ENCODE measurements at regions of chr13 and their contacts with region 1.

Region 1: DNA sequence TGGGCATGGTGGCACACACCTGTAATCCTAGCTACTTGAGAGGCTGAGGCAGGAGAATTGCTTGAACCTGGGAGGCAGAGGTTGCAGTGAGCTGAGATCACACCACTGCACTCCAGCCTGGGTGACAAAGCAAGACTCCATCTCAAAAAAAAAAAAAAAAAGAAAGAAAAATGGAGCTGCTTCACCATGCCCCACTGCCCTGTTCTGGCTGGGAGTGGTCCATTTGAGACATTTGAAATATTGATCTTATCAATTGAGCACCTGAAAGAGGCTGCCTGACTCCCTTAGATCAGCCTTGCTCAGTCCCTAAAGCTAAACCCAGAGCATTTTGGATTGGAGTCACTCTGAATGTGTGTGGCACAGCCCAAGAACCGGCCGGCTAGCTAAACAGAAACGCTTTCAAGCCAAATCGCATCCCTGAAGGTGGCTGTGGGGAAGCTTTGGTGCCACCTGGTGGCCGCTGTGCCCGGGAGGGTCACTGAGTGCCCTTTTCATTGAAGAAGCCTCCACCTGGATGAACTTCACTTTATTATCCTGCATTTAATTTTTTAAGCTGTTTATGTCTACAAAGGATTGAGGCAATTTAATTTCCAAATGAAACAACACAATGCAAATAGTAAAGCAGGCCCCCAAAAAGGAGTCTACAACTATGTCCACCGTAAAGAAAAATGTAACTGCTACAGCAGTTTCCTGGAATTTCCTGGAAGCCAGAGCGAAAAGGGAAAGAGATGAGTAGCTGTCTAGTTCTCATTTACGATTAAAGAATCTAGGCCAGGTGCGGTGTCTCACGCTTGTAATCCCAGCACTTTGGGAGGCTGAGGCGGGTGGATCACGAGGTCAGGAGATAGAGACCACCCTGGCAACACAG is 53.1 kb upstream of the SERPINE3 start:
- DNase-seq: no peak
- H3K4me3 ChIP-seq: no peak overlapping the region
- H3K27ac ChIP-seq: no peak overlapping the region
- H3K4me1 ChIP-seq: peaks cover 0 to under 1% (median 0%) of the 10 kb centered on the region in 3 donors
- H3K27me3 ChIP-seq: no peaks in the 10 kb centered on the region
- CTCF ChIP-seq: peak; percentile 72 to 90 (median 83)
- POLR2A ChIP-seq: no peak

Region 2: DNA sequence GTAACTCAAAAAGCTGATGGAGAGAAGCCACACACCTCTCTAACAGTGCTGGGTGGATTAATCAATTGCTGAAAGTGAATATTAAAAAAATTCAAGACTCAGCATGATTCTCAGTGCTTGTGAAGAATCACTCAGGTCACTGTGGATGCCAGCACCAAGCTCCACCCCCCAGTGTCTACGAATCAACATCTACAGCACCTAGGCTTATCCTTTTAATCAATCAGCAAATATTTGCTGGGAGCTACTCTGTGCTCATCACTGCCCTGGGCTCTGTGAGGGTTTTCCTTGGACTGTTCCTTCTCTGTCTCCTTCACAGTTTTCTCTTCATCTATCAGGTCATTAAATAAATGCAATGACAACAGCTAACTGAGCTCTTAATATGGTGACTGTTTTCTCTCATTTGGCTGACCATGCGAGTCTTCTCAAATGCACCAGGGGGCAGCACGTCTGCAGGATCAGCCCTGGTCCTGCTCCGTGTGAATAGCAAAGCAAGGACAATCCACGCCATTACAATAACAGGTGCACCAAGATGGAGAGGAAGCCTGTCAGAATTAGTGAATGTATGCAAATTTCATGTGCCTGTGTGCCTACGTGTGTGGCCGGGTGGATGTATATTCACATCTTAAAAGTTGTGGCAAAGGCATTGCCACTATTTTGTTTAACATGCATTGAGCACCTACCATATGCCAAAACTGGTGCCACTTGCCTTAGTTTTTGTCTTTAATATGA is 160.7 kb before region 1 on chr13:
- intact Hi-C with region 1: loop called (anchors 5 kb)
- DNase-seq: no peak
- H3K4me3 ChIP-seq: no peak overlapping the region
- H3K27ac ChIP-seq: no peak overlapping the region
- H3K4me1 ChIP-seq: no peaks in the 10 kb centered on the region
- H3K27me3 ChIP-seq: peaks cover 0 to 22% (median 0%) of the 10 kb centered on the region in 4 donors
- CTCF ChIP-seq: peak; percentile 16 to 75 (median 66)
- POLR2A ChIP-seq: no peak

Region 3: DNA sequence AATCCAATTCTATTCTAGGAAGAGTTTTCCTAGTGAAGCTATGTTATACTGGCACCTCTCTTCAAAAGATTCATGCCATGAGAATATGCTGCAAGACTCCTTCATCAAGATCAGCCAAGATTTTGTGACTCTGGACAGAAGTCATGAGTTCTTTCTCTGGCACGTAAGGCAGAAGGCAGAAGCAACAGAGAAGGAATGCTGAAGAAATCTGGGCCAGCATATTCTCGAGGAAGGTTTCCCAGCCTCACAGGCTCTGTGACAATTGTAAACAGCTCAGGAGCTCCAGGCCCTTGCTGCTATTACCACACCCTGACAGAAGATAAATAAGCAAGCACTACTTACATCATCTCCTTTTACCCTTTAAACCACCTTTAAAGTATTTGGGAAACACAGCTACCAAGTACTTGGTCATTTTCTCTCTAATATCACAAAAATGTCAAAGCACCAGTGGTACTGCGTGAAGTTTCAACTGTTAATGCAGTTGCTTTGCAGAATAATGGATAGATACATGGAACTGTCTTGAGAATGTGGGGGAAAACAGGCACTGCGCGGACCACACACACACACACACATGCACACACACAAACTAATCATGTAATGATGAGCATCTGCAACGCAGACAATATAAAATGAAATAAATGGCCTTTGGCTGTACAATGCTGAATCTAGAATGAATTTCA is 111.0 kb after region 1 on chr13:
- intact Hi-C with region 1: no loop called
- DNase-seq: no peak
- H3K4me3 ChIP-seq: no peak overlapping the region
- H3K27ac ChIP-seq: peak overlapping the region in 3 of 4 donors; percentile 28 to 37 (median 36)
- H3K4me1 ChIP-seq: peaks cover 0 to 20% (median 7%) of the 10 kb centered on the region in 3 donors
- H3K27me3 ChIP-seq: no peaks in the 10 kb centered on the region
- CTCF ChIP-seq: no peak
- POLR2A ChIP-seq: no peak

Measured in esophagus squamous epithelium (tissue), 5 donors.